Activated CD4-positive, alpha-beta T cell treated with anti-CD3 and anti-CD28 coated beads, Interleukin-2, amount 10 ng/mL, durations not matched to agents 24 days and 14 days (primary cell): ENCODE measurements at regions of chr2 and their contacts with region 1.

Region 1: DNA sequence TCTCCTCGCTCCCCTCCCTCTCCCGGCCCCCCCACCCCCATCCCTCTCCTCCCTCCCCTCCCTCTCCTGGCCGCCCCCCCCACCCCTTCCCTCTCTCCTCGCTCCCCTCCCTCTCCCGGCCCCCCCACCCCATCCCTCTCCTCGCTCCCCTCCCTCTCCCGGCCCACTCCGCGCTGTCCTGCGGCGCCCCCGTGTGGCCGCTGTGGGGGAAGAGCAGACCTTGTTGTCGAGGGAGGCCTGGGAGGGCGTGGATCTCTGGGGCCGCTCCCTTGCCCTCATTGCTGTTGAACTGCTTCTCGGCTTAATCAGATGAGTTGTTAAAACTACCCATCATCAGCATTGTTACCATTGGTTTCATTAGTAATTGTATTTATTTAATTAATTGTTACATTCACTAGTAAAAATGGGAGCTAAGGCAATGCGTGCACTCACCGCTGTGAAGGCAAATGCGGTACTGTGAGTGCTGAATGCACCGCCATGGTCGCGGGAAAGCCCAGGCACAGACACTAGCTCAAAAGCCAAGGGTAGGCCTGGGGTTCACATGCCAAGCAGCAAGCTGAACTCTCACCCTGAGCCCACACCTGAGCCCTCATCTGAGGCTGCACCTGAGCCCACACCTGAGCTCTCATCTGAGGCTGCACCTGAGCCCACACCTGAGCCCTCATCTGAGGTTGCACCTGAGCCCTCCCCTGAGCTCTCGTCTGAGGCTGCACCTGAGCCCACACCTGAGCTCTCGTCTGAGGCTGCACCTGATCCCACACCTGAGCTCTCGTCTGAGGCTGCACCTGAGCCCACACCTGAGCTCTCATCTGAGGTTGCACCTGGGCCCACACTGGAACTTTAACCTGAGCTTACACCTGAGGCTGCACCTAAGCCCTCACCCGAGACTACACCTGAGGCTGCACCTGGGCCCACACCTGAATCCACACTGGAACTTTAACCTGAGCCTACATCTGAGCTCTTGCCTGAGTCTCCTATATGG is 8.8 kb downstream of the RTP5 start:
- DNase-seq: peak; percentile 94
- H3K4me3 Mint-ChIP-seq: no peak overlapping the region
- H3K27ac Mint-ChIP-seq: no peak overlapping the region
- H3K4me1 Mint-ChIP-seq: peaks cover 26% of the 10 kb centered on the region
- H3K27me3 Mint-ChIP-seq: peaks cover 4% of the 10 kb centered on the region

Region 2: GRCh38 chr2:240832205-240832727 is 1046.0 kb before region 1 on chr2:
- intact Hi-C with region 1: loop called (anchors 5 kb)
- DNase-seq: peak; percentile 99
- H3K4me3 Mint-ChIP-seq: peak overlapping the region; percentile 77
- H3K27ac Mint-ChIP-seq: no peak overlapping the region
- H3K4me1 Mint-ChIP-seq: peaks cover 2% of the 10 kb centered on the region
- H3K27me3 Mint-ChIP-seq: peaks cover 23% of the 10 kb centered on the region

Region 3: GRCh38 chr2:241540771-241541561 is 337.3 kb before region 1 on chr2:
- intact Hi-C with region 1: loop called (anchors 1 kb)
- DNase-seq: peak; percentile 90
- H3K4me3 Mint-ChIP-seq: peak overlapping the region; percentile 75
- H3K27ac Mint-ChIP-seq: no peak overlapping the region
- H3K4me1 Mint-ChIP-seq: no peaks in the 10 kb centered on the region
- H3K27me3 Mint-ChIP-seq: peaks cover 17% of the 10 kb centered on the region

Region 4: DNA sequence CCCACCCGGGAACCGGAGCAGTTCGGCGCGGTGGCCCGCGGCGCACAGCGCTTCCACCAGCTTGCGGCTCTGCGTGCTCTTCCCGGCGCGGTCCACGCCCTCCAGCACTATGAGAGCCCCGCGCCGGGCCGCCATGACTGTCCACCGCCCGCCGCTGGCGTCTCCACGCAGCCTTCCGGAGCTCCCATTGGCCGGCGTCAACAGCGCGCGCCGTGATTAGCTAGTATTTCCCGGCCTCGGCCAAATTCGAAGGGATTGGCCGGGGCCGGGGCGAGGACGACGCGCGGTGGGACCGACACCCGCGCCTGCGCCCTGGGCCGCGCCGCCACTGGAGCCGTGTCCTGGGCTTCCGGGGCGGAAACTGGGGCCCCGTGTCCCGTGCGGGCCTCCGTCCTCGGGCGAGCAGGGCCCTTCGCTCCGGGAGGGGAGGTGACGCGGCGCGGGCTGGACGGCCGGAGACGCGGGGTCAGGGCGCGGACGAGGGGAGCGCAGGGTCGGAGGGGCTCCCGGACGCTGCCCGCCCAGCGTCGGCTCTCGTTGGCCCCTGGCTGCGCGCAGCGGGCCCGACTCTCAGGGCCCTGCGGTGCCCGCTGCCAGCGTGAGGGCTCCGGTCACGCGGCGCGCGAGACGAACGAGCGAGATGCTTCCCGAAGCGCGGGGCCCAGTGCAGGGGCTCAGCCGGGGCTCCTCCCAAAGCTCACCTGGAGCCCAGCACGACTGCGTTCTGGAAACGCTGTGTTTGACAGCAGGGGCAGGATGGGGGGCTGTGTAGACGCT is 191.4 kb before region 1 on chr2 and contains the start of gene DTYMK:
- intact Hi-C with region 1: loop called (anchors 1 kb)
- DNase-seq: peak; percentile 99
- H3K4me3 Mint-ChIP-seq: peak within 1 kb of the TSS; percentile 90
- H3K27ac Mint-ChIP-seq: peak within 1 kb of the TSS; percentile 98
- H3K4me1 Mint-ChIP-seq: peaks cover 21% of the 10 kb centered on the region
- H3K27me3 Mint-ChIP-seq: no peaks in the 10 kb centered on the region
- total RNA-seq, gene DTYMK: 110 and 111 TPM in 2 replicates

Region 5: DNA sequence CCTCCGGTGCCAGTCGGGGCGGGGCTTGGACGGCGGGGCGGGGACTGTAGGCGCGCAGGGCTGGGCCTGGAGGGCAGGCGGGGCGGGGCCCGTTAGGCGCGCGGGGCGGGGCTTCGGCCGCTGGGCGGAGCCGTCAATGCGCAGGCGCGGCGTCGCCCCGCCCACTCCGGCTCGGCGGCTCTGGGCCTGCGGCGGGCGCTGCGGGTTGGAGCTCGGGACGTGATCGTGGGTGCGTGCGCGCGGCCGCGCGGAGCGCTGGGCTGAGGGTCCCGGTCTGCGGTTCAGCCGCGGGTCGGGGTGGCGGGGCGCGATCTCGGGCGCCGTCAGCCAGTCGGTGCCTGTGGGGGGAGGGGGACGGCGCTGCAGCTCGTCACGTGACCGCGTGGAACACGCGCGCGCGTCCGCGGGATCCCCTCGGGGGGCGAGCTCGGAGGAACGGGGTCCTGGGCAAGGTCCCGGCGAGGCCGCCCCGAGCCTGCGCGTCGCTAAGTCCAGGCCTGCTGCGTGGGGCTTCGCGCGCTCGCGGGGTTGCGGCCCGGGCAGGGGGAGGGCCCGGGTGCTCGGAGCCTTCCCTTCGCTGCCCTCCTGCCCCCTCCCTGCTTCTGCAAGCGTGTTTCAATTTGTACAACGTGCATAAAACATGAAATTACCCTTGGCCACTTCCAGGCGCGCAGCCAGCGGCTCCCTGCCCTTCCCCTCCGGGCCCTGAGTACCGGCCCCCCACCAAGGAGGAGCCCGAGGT is 143.6 kb before region 1 on chr2 and contains the start of gene D2HGDH:
- intact Hi-C with region 1: loop called (anchors 1 kb)
- DNase-seq: peak; percentile 98
- H3K4me3 Mint-ChIP-seq: peak within 1 kb of the TSS; percentile 83
- H3K27ac Mint-ChIP-seq: peak within 1 kb of the TSS; percentile 65
- H3K4me1 Mint-ChIP-seq: peaks cover 42% of the 10 kb centered on the region
- H3K27me3 Mint-ChIP-seq: no peaks in the 10 kb centered on the region
- total RNA-seq, gene D2HGDH: 34.2 and 40.4 TPM in 2 replicates

Region 6: DNA sequence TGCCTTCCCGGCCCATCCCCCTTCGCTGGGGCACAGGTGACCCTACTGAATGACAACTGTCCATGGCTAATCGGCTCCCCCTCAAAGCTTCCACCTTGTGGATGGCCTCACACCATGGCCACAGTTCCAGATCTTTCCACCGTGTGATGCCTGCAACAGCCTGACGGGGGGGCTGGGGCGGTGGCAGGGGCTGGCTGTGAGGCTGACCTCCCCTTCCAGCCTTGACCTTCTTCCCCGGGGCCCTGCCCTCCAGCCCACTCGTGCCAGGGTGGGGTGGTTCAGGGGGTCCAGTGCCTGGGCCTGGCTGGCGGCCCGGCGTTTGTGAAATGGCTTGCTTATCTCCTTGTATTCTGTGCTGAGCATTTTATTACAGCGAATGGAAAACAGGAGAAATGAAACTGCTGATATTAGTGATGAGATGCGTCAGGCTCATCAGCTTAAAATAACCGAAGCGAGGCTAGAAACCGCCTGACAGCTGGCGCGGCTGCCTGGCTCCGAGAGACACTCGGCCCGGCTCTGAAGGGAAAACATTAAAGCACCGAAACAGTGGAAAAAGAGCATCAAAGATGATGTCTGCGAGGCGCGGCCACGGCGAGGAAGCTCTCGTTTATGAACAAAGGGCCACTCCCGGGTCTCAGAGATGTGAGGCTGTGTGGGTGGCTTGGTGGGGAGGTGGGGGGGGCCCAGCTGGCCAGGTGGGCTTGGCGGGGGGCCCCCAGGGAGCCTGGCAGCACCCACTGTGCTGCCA is 18.7 kb before region 1 on chr2:
- intact Hi-C with region 1: loop called (anchors 2 kb)
- DNase-seq: peak; percentile 86
- H3K4me3 Mint-ChIP-seq: peak overlapping the region; percentile 89
- H3K27ac Mint-ChIP-seq: peak overlapping the region; percentile 91
- H3K4me1 Mint-ChIP-seq: peaks cover 55% of the 10 kb centered on the region
- H3K27me3 Mint-ChIP-seq: peaks cover 5% of the 10 kb centered on the region

Region 7: DNA sequence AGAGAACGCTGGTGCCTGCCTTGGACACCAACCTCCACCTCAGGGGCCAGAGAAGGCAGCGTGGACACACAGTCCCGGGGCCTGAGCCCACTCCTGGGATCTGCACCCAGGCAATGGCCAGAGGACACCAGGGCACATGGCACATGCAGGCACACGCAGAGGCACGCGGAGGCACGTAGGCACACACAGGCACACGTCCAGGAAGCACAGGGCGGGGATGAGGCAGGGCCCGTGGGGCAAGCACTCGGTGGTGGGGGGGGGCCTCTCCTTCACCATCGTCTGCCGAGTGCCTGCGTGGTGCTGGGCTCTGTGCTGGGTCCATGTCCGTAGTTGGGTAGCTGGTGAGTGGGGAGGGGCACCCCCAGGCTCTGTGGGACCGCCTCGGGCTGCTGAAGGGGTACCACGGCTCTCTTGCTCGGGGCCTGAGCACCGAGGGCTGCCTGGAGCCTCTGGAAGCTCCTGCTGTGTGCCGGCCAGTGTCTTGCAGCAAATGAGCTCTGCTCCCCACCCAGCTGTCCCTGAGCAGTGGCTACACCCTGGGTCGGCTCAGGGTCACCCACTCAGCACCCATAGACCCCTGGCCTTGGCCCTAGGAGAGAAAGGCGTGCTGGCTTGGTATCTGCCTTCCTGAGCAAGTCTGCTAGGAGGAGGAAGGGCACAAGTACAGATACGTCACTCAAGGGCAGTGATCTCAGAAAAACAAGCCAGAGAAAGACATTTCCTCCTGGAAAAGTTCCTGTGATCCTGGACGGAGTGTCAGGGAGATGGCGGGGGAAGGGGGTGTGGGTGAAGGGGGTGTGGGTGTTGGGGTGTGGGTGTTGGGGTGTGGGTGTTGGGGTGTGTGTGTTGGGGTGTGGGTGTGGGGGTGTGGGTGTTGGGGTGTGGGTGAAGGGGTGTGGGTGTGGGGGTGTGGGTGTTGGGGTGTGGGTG is 17.7 kb after region 1 on chr2:
- intact Hi-C with region 1: no loop called
- DNase-seq: no peak
- H3K4me3 Mint-ChIP-seq: peak overlapping the region; percentile 71
- H3K27ac Mint-ChIP-seq: peak overlapping the region; percentile 96
- H3K4me1 Mint-ChIP-seq: peaks cover 11% of the 10 kb centered on the region
- H3K27me3 Mint-ChIP-seq: peaks cover 2% of the 10 kb centered on the region